ENCODE measurements at regions of chr4 and their contacts with region 1.

Region 1: GRCh38 chr4:83639849-83640493 is 104.1 kb downstream of the GPAT3 start:
- DNase-seq: no peak
- H3K4me3 ChIP-seq: no peak overlapping the region
- CTCF ChIP-seq: peak; percentile 69

Region 2: DNA sequence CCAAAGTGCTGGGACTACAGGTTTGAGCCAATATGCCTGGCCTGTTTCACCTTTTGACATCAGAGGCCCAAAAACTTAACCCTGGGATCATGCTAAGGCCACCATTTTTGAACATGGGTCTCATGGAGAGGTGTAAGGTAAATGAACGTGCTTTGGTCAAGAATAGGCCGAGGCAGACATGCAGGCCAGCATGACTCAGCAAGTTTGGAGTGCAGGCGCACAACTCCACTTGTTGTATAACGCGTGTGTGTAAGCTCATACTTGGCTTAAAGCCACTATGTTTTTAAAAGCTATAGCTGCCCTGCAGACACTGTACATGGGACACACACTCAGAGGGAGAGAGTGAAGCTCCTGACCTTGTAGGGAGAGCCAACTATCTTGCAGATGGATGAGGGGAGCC is 261.6 kb before region 1 on chr4:
- CTCF ChIA-PET with region 1: no interaction called
- POLR2A ChIA-PET with region 1: no interaction called
- DNase-seq: no peak
- H3K4me3 ChIP-seq: no peak overlapping the region
- CTCF ChIP-seq: no peak

Region 3: GRCh38 chr4:83408908-83409307 is 231.1 kb before region 1 on chr4:
- CTCF ChIA-PET with region 1: no interaction called
- POLR2A ChIA-PET with region 1: no interaction called
- DNase-seq: no peak
- H3K4me3 ChIP-seq: no peak overlapping the region
- CTCF ChIP-seq: no peak

Region 4: DNA sequence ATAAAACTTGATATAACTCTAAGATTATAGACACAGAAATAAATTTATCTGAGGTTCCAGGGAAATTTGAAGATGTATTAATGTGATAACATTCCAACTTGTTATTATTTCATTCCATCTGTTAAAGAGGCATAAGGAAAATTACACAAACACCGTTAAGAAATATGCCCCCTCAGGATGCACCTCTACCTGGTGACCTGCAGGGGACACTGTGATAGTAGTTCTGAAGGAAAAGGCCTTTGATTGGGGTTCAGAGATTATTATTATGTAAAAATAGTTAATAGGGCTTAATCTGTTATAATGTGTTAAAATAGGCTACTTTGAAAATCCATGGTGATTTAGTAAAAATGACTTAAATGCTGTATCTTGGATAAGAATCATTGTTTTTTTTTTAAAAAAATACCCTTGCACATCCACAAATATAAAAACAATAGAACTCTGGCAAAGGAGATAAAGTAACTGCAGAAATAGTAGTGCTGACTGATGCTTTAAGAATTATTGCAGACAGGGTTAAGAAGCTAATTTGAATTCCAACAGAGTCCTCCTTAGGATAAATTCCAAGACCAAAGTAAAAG is 149.0 kb before region 1 on chr4:
- CTCF ChIA-PET with region 1: interaction called, 10 read pairs
- POLR2A ChIA-PET with region 1: no interaction called
- DNase-seq: no peak
- H3K4me3 ChIP-seq: no peak overlapping the region
- CTCF ChIP-seq: peak; percentile 70

Region 5: GRCh38 chr4:83510442-83510841 is 129.5 kb before region 1 on chr4:
- CTCF ChIA-PET with region 1: interaction called, 114 read pairs
- POLR2A ChIA-PET with region 1: no interaction called
- DNase-seq: no peak
- H3K4me3 ChIP-seq: no peak overlapping the region
- CTCF ChIP-seq: no peak

Region 6: GRCh38 chr4:83651502-83652245 is 11.7 kb after region 1 on chr4:
- CTCF ChIA-PET with region 1: interaction called, 96 read pairs
- POLR2A ChIA-PET with region 1: no interaction called
- DNase-seq: no peak
- H3K4me3 ChIP-seq: no peak overlapping the region
- CTCF ChIP-seq: no peak

Region 7: DNA sequence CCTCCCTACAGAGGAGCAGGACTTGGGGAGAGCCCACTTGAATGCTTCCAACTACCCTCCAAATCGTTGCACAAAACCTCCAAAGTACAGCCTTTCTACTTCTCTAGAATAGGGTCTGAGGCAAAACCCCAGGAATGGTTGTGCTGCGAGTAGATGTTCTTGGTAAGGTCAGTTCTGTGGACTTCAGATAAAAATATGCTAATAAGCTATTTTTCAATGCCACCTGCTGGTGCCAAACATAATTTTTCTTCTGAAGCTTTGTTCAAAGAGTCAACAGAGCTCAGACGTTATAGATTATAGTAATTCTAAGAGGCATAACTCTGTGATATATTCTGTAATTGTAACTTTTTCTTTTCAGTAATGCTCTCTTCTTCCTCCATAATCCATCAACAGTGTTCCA is 321.6 kb after region 1 on chr4:
- CTCF ChIA-PET with region 1: interaction called, 58 read pairs
- POLR2A ChIA-PET with region 1: no interaction called
- DNase-seq: no peak
- H3K4me3 ChIP-seq: no peak overlapping the region
- CTCF ChIP-seq: peak; percentile 17

Region 8: DNA sequence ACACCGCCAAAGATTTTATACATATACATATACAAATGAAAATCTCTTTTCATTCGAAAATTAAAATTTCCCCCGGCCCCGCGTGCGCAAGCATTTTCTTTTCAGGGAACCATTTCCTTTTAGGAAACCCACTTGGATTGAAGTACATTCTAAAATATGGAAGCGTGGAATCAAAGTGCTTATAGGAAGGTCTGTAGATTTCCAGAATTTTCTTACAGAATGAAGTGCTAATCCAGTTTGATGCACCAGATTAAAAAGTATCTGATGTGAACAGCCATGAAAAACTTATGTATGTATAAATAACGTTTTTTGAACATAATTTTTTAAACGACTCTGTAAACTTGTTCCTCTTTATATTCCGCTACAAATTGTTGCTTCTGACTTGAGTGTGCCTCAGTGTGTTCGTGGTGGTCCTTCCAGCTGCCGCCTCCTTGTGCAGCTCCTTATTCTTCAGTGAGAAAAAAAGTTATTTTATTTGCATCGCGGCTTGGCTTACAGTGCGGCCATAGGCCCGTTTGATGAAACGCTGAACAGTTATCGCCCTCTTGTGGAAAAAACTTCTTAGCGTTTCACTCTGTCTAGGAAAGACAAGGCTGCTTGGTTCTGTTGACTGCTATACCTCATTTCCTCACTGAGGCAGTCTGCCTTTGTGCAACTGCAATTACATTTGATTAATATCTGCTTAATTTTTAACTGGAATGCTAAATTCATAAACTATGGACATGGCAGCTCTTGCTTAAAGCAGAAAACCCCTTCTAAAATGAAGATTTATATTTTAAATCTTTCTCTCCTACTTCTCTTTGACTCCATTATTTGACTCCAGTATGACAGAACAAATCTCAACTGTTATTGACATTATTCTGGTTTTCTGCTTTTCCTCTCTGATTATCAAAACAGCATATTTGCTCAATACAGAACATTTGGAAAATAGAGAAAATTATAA is 863.8 kb after region 1 on chr4:
- CTCF ChIA-PET with region 1: interaction called, 67 read pairs
- POLR2A ChIA-PET with region 1: no interaction called
- DNase-seq: peak; percentile 10
- H3K4me3 ChIP-seq: no peak overlapping the region
- CTCF ChIP-seq: peak; percentile 69

Measured in AG04449 (cell line).